IMR-90 (cell line): ENCODE measurements at regions of chr10 and their contacts with region 1.

Region 1: GRCh38 chr10:13160934-13161856 is at the start of gene MCM10:
- DNase-seq: peak; percentile 100
- ATAC-seq: peak; percentile 100
- H3K4me3 ChIP-seq: peak within 1 kb of the TSS; percentile 50
- H3K27ac ChIP-seq: peak within 1 kb of the TSS; percentile 39; the same call in 1 of the 2 replicates
- H3K4me1 ChIP-seq: no peaks in the 10 kb centered on the region; the same call in 1 of the 2 replicates
- H3K27me3 ChIP-seq: no peaks in the 10 kb centered on the region
- CTCF ChIP-seq: peak; percentile 95
- POLR2A ChIP-seq: no peak
- RAD21 ChIP-seq: peak; percentile 78
- total RNA-seq, gene MCM10: 11.8 and 14.4 TPM in 2 replicates

Region 2: GRCh38 chr10:13276749-13277365 is 115.7 kb after region 1 on chr10:
- CTCF ChIA-PET with region 1: no interaction called
- POLR2A ChIA-PET with region 1: no interaction called
- dilution Hi-C with region 1: no loop called
- in situ Hi-C with region 1: no loop called
- intact Hi-C with region 1: loop called (anchors 1 kb)
- DNase-seq: peak; percentile 41
- ATAC-seq: peak; percentile 42; the same call in 1 of the 2 replicates
- H3K4me3 ChIP-seq: no peak overlapping the region
- H3K27ac ChIP-seq: no peak overlapping the region
- H3K4me1 ChIP-seq: peaks cover 3% of the 10 kb centered on the region; the same call in 1 of the 2 replicates
- H3K27me3 ChIP-seq: no peaks in the 10 kb centered on the region
- CTCF ChIP-seq: peak; percentile 39
- POLR2A ChIP-seq: no peak
- RAD21 ChIP-seq: peak; percentile 33; the same call in 1 of the 2 replicates

Region 3: GRCh38 chr10:13299437-13300287 is 138.5 kb after region 1 on chr10 and contains the start of gene PHYH:
- CTCF ChIA-PET with region 1: no interaction called
- POLR2A ChIA-PET with region 1: no interaction called
- dilution Hi-C with region 1: no loop called
- in situ Hi-C with region 1: no loop called
- intact Hi-C with region 1: loop called (anchors 1 kb)
- DNase-seq: peak; percentile 74
- ATAC-seq: peak; percentile 89
- H3K4me3 ChIP-seq: peak within 1 kb of the TSS; percentile 42
- H3K27ac ChIP-seq: peak within 1 kb of the TSS; percentile 64
- H3K4me1 ChIP-seq: peaks cover 5% of the 10 kb centered on the region; the same call in 1 of the 2 replicates
- H3K27me3 ChIP-seq: no peaks in the 10 kb centered on the region
- CTCF ChIP-seq: no peak
- POLR2A ChIP-seq: peak; percentile 51; the same call in 1 of the 2 replicates
- RAD21 ChIP-seq: no peak
- total RNA-seq, gene PHYH: 9.7 and 10.9 TPM in 2 replicates

Region 4: DNA sequence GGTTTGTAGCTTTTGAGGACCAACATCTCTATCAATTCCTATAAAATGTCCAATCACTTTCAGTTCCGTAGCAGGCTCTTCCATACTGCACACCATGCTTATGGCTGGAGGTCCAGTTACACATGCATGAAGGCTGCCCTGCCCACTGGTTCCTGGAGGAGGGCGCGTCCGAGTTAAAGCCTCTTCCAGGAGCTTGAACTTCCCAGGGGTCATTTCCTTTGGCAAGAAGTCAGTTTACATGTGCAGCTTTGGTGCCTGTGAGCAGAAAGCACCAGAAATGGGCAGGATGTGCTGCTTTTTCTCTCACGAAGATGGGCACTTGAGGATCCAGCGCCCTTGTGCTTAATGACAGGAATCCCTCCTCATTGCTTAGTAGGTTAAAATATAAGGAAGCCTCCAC is 156.3 kb after region 1 on chr10:
- CTCF ChIA-PET with region 1: no interaction called
- POLR2A ChIA-PET with region 1: interaction called, 20 read pairs
- dilution Hi-C with region 1: no loop called
- in situ Hi-C with region 1: no loop called
- intact Hi-C with region 1: no loop called
- DNase-seq: no peak
- ATAC-seq: no peak
- H3K4me3 ChIP-seq: no peak overlapping the region
- H3K27ac ChIP-seq: no peak overlapping the region
- H3K4me1 ChIP-seq: no peaks in the 10 kb centered on the region
- H3K27me3 ChIP-seq: no peaks in the 10 kb centered on the region
- CTCF ChIP-seq: no peak
- POLR2A ChIP-seq: no peak
- RAD21 ChIP-seq: no peak

Region 5: GRCh38 chr10:13518076-13518692 is 357.0 kb after region 1 on chr10:
- CTCF ChIA-PET with region 1: no interaction called
- POLR2A ChIA-PET with region 1: no interaction called
- dilution Hi-C with region 1: no loop called
- in situ Hi-C with region 1: no loop called
- intact Hi-C with region 1: no loop called
- DNase-seq: peak; percentile 22
- ATAC-seq: peak; percentile 61
- H3K4me3 ChIP-seq: no peak overlapping the region
- H3K27ac ChIP-seq: no peak overlapping the region
- H3K4me1 ChIP-seq: no peaks in the 10 kb centered on the region
- H3K27me3 ChIP-seq: no peaks in the 10 kb centered on the region
- CTCF ChIP-seq: peak; percentile 47
- POLR2A ChIP-seq: no peak
- RAD21 ChIP-seq: peak; percentile 53